PC-9 (cell line): ENCODE measurements at regions of chrX and their contacts with region 1.

Region 1: DNA sequence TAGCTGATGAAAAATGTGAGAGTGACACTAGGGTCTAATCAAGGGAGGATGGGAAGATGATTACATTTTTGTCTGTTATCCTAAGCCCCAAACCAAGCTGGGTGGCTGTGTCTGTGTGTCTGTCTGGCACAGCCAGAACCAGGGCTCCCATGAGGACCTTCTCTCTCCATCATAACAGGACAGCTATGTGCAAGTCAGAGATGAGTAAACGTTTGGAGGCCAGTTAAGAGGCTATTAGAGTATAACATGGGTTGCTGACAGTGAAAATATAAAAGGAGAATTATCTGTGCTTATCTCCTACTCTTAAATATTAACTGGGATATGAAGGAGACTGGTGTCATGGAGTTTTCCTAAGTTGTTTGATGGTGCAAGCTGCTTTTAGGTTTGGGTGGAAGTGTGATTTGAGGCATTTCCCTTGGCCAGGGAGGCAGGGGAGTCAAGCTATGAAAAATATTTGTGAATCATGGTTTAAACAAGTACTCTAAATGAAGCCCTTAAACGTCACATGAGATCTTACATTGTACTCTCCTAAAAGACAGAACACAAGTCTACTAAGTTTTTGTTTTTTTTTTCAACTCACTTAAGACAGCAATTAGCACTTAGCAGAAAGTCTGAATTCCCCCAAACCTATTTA is 156.2 kb downstream of the ENOX2 start:
- DNase-seq: no peak
- H3K4me3 ChIP-seq: no peak overlapping the region
- H3K27ac ChIP-seq: no peak overlapping the region
- H3K4me1 ChIP-seq: no peaks in the 10 kb centered on the region
- H3K27me3 ChIP-seq: no peaks in the 10 kb centered on the region
- CTCF ChIP-seq: no peak

Region 2: DNA sequence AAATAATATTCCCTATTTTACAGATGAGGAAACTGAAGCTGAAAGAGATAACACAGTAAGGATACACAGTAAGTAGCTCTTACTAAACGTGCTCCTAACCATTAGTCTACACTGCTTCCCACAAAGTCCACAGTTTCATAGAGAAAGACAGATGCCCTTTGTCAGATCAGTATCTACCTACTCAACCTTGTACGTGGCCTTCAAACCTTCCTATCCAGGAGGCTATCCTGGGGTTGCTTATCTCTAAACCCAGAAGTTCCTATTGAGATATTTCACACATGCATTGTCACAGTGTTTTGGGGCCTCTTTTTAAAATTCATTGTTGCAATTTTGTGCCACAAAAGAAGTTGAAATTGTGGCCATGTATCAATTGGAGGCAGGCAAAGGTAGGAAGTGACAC is 51.8 kb before region 1 on chrX:
- CTCF ChIA-PET with region 1: no interaction called
- POLR2A ChIA-PET with region 1: interaction called, 11 read pairs
- intact Hi-C with region 1: no loop called
- DNase-seq: no peak
- H3K4me3 ChIP-seq: no peak overlapping the region
- H3K27ac ChIP-seq: no peak overlapping the region
- H3K4me1 ChIP-seq: no peaks in the 10 kb centered on the region
- H3K27me3 ChIP-seq: no peaks in the 10 kb centered on the region
- CTCF ChIP-seq: no peak

Region 3: GRCh38 chrX:130810561-130810960 is 63.7 kb after region 1 on chrX:
- CTCF ChIA-PET with region 1: no interaction called
- POLR2A ChIA-PET with region 1: no interaction called
- intact Hi-C with region 1: no loop called
- DNase-seq: no peak
- H3K4me3 ChIP-seq: no peak overlapping the region
- H3K27ac ChIP-seq: no peak overlapping the region
- H3K4me1 ChIP-seq: peaks cover 15% of the 10 kb centered on the region; the same call in 1 of the 2 replicates
- H3K27me3 ChIP-seq: no peaks in the 10 kb centered on the region
- CTCF ChIP-seq: no peak